A673 (cell line): ENCODE measurements at regions of chr5 and their contacts with region 1.

Region 1: GRCh38 chr5:28779161-28779754 is 1740.9 kb upstream of the CDH9 start:
- DNase-seq: peak; percentile 15
- H3K4me3 ChIP-seq: no peak overlapping the region
- H3K27ac ChIP-seq: no peak overlapping the region
- H3K4me1 ChIP-seq: no peaks in the 10 kb centered on the region
- H3K27me3 ChIP-seq: no peaks in the 10 kb centered on the region
- CTCF ChIP-seq: peak; percentile 38; the same call in 1 of the 2 replicates

Region 2: GRCh38 chr5:27682599-27682998 is 1096.7 kb before region 1 on chr5:
- CTCF ChIA-PET with region 1: no interaction called
- POLR2A ChIA-PET with region 1: no interaction called
- intact Hi-C with region 1: loop called (anchors 10 kb)
- DNase-seq: peak; percentile 20
- H3K4me3 ChIP-seq: no peak overlapping the region
- H3K27ac ChIP-seq: no peak overlapping the region
- H3K4me1 ChIP-seq: no peaks in the 10 kb centered on the region
- H3K27me3 ChIP-seq: no peaks in the 10 kb centered on the region
- CTCF ChIP-seq: peak; percentile 42; the same call in 1 of the 2 replicates